ENCODE measurements at regions of chr10 and their contacts with region 1.

Region 1: GRCh38 chr10:90319188-90319914 is 538.5 kb downstream of the HTR7 start:
- DNase-seq: peak; percentile 90
- H3K4me3 ChIP-seq: no peak overlapping the region
- CTCF ChIP-seq: no peak

Region 2: DNA sequence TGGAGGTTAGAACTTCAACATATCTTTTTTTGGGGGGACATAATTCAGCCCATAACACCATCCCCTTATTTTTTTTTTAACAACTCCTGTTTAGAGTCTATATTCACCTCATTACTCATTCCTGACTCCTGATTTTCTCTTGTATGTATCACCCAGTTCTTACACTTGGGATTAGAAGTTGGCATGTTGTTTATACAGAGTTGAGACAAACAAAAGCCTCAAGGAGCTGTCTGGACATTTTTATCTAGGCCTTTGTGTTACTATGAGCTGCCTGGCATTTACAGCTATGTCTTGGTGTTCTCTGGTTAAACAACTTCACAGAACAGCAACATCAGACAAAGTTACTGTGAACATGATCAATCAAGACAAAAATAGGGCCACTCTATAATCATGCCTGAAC is 100.5 kb before region 1 on chr10:
- in situ Hi-C with region 1: loop called (anchors 5 kb)
- DNase-seq: no peak
- H3K4me3 ChIP-seq: no peak overlapping the region
- CTCF ChIP-seq: no peak